A549 (cell line): ENCODE measurements at regions of chr5 and their contacts with region 1.

Region 1: GRCh38 chr5:43396762-43397304 is 15.4 kb downstream of the CCL28 start:
- DNase-seq: peak in 1 of 2 experiments; percentile 17
- ATAC-seq: peak; percentile 75 to 83
- H3K4me3 ChIP-seq: peak overlapping the region; percentile 37
- H3K27ac ChIP-seq: peak overlapping the region; percentile 47 to 50; a peak in 5 of 6 replicates
- H3K4me1 ChIP-seq: peaks cover 2% of the 10 kb centered on the region; the same call in 1 of the 3 replicates
- CTCF ChIP-seq: no peak
- EP300 ChIP-seq: no peak
- POLR2A ChIP-seq: no peak
- RAD21 ChIP-seq: no peak

Region 2: DNA sequence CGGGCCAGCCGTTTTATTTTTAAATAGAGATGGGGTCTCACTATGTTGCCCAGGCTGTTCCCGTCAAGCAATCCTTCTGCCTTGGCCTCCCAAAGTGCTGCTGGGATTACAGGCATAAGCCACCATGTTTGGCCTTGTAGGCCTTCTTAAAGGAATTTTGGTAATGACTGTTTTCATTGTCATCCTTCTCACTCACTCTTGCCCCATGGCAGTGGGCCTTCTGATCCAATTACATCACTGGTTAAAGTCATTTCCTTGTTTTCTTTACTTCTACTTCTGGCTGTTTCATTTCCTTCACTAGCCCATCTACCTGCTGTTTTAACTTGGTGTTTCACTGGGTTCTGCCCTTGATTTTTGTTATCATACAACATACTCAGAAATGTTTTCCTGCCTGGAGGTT is 224.9 kb before region 1 on chr5:
- CTCF ChIA-PET with region 1: no interaction called
- POLR2A ChIA-PET with region 1: no interaction called
- DNase-seq: no peak
- ATAC-seq: no peak
- H3K4me3 ChIP-seq: no peak overlapping the region
- H3K27ac ChIP-seq: no peak overlapping the region
- H3K4me1 ChIP-seq: no peaks in the 10 kb centered on the region
- CTCF ChIP-seq: no peak
- EP300 ChIP-seq: no peak
- POLR2A ChIP-seq: no peak
- RAD21 ChIP-seq: no peak

Region 3: DNA sequence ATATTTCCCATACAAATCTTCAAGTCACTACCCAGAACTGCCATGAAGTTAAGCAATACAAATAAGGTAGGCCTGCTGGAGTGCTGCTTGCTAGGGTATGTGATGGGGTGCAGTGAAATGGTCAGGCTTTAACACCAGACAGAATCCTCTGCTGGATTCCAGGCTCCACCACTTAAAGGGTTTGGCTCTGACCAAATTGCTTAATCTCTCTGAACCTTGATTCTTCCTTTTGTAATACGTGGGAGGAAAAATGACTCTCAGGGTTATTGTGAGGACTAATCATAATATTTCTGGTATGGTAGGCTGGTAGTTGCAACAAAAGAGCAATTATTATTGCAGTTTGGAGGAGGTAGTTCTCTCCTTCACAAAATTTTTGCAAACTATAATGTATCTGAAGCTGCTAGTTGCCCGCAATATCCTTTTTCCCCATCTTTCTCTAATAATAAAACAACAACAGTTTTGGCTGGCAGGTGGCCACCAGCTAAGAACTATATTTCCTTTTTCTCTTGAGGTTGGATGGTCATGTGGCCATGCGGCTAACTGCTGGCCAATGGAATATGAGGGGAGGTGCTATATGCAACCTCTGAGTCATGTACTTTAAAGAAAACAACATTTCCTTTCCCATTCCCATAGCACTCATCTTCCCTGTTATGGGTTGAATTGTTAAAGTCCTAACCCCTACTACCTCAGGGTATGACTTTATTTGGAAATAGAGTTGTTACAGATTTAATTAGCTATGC is 28.8 kb before region 1 on chr5:
- CTCF ChIA-PET with region 1: no interaction called
- POLR2A ChIA-PET with region 1: no interaction called
- DNase-seq: no peak
- ATAC-seq: no peak
- H3K4me3 ChIP-seq: no peak overlapping the region
- H3K27ac ChIP-seq: no peak overlapping the region
- H3K4me1 ChIP-seq: no peaks in the 10 kb centered on the region
- CTCF ChIP-seq: no peak
- EP300 ChIP-seq: no peak
- POLR2A ChIP-seq: no peak
- RAD21 ChIP-seq: no peak

Region 4: DNA sequence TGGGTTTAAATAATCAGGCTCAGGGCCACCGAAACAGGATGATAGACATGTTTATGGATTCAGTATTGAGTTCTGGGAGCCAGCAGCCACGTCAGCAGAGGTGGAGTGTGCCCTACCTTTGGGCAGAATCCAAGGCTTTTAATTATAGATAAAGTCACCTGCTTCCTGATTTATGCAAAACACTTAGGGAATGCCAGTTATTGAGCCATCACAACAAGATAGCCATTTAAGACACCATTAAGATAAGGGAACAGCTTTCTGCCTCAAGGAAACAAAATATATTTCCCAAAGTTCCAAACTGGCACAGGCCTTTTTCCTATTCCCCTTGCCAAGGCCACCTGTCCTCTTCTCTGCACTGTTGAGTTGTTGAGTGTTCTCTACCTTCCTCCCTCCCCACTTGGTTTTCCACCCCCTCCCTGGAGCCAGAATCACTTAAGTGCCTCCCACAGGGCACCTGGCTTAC is 13.0 kb after region 1 on chr5:
- CTCF ChIA-PET with region 1: interaction called, 16 read pairs
- POLR2A ChIA-PET with region 1: no interaction called
- DNase-seq: no peak
- ATAC-seq: no peak
- H3K4me3 ChIP-seq: no peak overlapping the region
- H3K27ac ChIP-seq: no peak overlapping the region
- H3K4me1 ChIP-seq: no peaks in the 10 kb centered on the region
- CTCF ChIP-seq: no peak
- EP300 ChIP-seq: no peak
- POLR2A ChIP-seq: no peak
- RAD21 ChIP-seq: no peak